B cell (primary cell): ENCODE measurements at regions of chr11 and their contacts with region 1.

Region 1: GRCh38 chr11:131694526-131695424 is 324.4 kb downstream of the NTM start:
- DNase-seq: peak; percentile 37
- ATAC-seq: peak; percentile 51
- H3K4me3 ChIP-seq: no peak overlapping the region
- H3K4me3 Mint-ChIP-seq: no peak overlapping the region
- H3K27ac ChIP-seq: no peak overlapping the region
- H3K27ac Mint-ChIP-seq: no peak overlapping the region
- H3K4me1 ChIP-seq: no peaks in the 10 kb centered on the region
- H3K4me1 Mint-ChIP-seq: no peaks in the 10 kb centered on the region
- H3K27me3 ChIP-seq: peaks cover 0 to 16% (median 0%) of the 10 kb centered on the region in 4 experiments
- H3K27me3 Mint-ChIP-seq: peaks cover 35% of the 10 kb centered on the region
- CTCF ChIP-seq: peak; percentile 77

Region 2: DNA sequence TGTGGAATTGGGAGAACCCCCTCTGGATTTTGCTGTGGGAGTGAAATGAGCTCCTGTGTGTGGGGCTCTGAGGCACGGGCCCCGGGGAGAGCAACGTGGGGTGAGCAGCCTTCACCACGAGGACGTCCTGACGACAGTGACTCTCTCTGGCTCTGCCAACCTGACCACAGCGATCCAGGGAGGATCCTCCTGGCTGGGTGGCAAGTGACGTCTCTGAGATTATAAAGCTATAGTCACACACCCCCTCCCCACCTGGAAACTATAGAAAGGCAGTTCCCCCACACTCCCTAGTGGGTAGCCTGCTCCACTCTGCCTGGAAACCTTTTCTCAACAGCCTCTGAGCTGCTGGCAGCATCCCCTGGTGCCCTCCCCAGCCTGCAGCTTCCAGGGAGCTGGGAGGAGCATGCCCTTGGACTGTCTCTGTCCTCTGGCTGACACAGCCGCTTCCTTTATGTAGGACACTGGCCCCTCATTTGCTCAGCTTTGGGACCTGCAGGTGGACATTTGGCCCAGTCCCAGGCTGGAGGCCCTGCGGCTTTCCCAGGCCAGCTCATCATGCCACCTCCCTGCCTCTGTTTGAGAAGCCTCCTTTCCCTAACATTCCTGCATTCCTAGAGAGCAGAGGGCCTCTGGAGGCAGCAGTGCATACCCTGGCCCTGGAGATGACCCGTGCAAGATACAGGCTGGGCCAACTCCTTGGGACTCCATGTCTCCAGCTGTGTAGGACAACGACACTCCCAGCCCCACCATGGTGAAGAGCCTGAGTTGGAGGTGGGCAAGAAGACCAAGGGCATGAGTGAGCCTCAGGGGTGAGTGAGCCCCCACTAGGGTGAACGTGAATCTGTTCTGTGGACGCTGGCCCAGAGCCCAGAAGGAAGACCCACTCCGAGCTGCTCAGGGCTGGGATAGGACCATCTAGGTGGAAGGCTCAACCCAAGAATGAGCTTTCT is 10.4 kb before region 1 on chr11:
- CTCF ChIA-PET with region 1: interaction called, 10 read pairs
- POLR2A ChIA-PET with region 1: no interaction called
- intact Hi-C with region 1: no loop called
- DNase-seq: no peak
- ATAC-seq: no peak
- H3K4me3 ChIP-seq: no peak overlapping the region
- H3K4me3 Mint-ChIP-seq: no peak overlapping the region
- H3K27ac ChIP-seq: no peak overlapping the region
- H3K27ac Mint-ChIP-seq: no peak overlapping the region
- H3K4me1 ChIP-seq: no peaks in the 10 kb centered on the region
- H3K4me1 Mint-ChIP-seq: no peaks in the 10 kb centered on the region
- H3K27me3 ChIP-seq: peaks cover 0 to 3% (median 0%) of the 10 kb centered on the region in 4 experiments
- H3K27me3 Mint-ChIP-seq: peaks cover 5% of the 10 kb centered on the region
- CTCF ChIP-seq: no peak